H1 (cell line): ENCODE measurements at regions of chr11 and their contacts with region 1.

Region 1: GRCh38 chr11:65700391-65700790 is 11.7 kb upstream of the KAT5 start:
- DNase-seq: no peak
- H3K4me3 ChIP-seq: no peak overlapping the region
- H3K27ac ChIP-seq: no peak overlapping the region
- H3K4me1 ChIP-seq: no peaks in the 10 kb centered on the region
- H3K27me3 ChIP-seq: no peaks in the 10 kb centered on the region; a peak in 3 of 7 replicates
- CTCF ChIP-seq: no peak
- EP300 ChIP-seq: no peak
- POLR2A ChIP-seq: no peak
- RAD21 ChIP-seq: no peak

Region 2: GRCh38 chr11:65574109-65574810 is 126.1 kb before region 1 on chr11:
- CTCF ChIA-PET with region 1: no interaction called
- POLR2A ChIA-PET with region 1: no interaction called
- DNase-seq: peak; percentile 72 to 84
- H3K4me3 ChIP-seq: peak overlapping the region; percentile 20 to 63 (median 40); a peak in 7 of 8 replicates
- H3K27ac ChIP-seq: no peak overlapping the region
- H3K4me1 ChIP-seq: peaks cover 13 to 32% (median 20%) of the 10 kb centered on the region in 4 experiments
- H3K27me3 ChIP-seq: peaks cover 8 to 39% (median 28%) of the 10 kb centered on the region in 4 experiments
- CTCF ChIP-seq: peak in 2 of 3 experiments; percentile 70 to 80; a peak in 3 of 4 replicates
- EP300 ChIP-seq: no peak
- POLR2A ChIP-seq: no peak
- RAD21 ChIP-seq: peak; percentile 17 to 49; a peak in 3 of 4 replicates

Region 3: DNA sequence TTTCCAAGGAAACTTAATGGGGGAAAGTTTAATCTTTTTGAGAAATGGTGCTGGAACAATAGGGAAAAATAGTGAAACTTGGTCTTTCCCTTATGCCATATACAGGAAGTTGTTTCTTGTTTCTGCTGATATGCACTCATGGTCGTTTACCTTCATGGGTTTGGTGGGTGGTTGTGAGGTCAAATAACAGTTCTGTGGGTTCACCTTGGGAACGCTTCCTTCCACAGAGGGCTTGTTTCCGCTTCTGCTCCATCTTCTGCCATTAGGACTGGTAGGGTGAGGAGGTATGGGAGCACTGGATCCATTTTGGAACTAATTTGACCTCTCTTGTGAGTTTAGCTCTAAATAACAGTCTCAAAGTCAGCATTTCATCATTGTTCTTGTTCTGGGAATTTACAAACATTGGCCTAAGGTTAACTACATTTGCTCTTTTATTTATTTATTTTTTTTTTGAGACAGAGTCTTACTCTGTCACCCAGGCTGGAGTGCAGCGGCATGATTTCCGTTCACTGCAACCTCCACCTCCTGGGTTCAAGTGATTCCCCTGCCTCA is 20.1 kb before region 1 on chr11:
- CTCF ChIA-PET with region 1: interaction called, 12 read pairs
- POLR2A ChIA-PET with region 1: no interaction called
- DNase-seq: no peak
- H3K4me3 ChIP-seq: no peak overlapping the region
- H3K27ac ChIP-seq: no peak overlapping the region
- H3K4me1 ChIP-seq: no peaks in the 10 kb centered on the region
- H3K27me3 ChIP-seq: no peaks in the 10 kb centered on the region
- CTCF ChIP-seq: no peak
- EP300 ChIP-seq: no peak
- POLR2A ChIP-seq: no peak
- RAD21 ChIP-seq: no peak

Region 4: GRCh38 chr11:65720237-65720934 is 20.0 kb after region 1 on chr11 and contains the start of gene RNASEH2C:
- CTCF ChIA-PET with region 1: interaction called, 5 read pairs
- POLR2A ChIA-PET with region 1: interaction called, 12 read pairs
- DNase-seq: peak; percentile 44 to 90
- H3K4me3 ChIP-seq: peak within 1 kb of the TSS; percentile 83 to 91 (median 85)
- H3K27ac ChIP-seq: peak within 1 kb of the TSS; percentile 90
- H3K4me1 ChIP-seq: peaks cover 0 to 6% (median 3%) of the 10 kb centered on the region in 4 experiments; a peak in 2 of 7 replicates
- H3K27me3 ChIP-seq: no peaks in the 10 kb centered on the region
- CTCF ChIP-seq: no peak
- EP300 ChIP-seq: no peak
- POLR2A ChIP-seq: peak; percentile 80 to 81
- RAD21 ChIP-seq: no peak
- total RNA-seq, gene RNASEH2C: 37.9 and 40.2 TPM in 2 replicates

Region 5: DNA sequence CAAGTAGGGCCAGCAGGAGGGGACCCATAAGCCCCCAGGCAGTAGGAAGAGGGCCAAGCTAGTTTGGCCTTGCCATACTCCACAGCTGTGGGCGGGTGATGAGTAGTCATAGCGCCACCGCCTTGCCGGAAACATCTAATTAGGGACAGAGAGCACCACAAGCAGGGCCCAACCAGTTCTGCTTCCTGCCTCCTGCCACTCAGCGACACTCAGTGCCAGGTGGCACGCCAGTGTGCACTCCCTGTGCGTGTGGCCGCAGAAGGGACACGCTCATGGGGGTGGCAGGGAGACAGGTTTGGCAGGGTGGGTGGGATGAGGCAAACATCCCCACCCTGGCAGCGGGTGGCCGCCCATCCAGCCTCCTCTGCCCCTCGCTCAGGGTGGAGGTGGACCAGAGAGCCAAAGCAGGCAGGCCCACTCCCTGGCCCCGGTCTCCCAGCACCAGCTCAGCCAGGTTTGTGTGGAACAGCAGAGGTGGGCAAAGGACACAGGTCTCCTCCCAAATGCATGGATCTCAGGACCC is 91.4 kb after region 1 on chr11:
- CTCF ChIA-PET with region 1: no interaction called
- POLR2A ChIA-PET with region 1: no interaction called
- DNase-seq: no peak
- H3K4me3 ChIP-seq: no peak overlapping the region
- H3K27ac ChIP-seq: no peak overlapping the region
- H3K4me1 ChIP-seq: peaks cover 14 to 25% (median 22%) of the 10 kb centered on the region in 4 experiments
- H3K27me3 ChIP-seq: peaks cover 5 to 22% (median 18%) of the 10 kb centered on the region in 4 experiments
- CTCF ChIP-seq: no peak
- EP300 ChIP-seq: no peak
- POLR2A ChIP-seq: no peak
- RAD21 ChIP-seq: no peak

Region 6: GRCh38 chr11:65873318-65874156 is 173.1 kb after region 1 on chr11:
- CTCF ChIA-PET with region 1: no interaction called
- POLR2A ChIA-PET with region 1: no interaction called
- DNase-seq: peak; percentile 84 to 100
- H3K4me3 ChIP-seq: peak overlapping the region; percentile 49 to 77 (median 68)
- H3K27ac ChIP-seq: no peak overlapping the region
- H3K4me1 ChIP-seq: peaks cover 0 to 8% (median under 1%) of the 10 kb centered on the region in 4 experiments; a peak in 4 of 7 replicates
- H3K27me3 ChIP-seq: peaks cover 0 to 35% (median 14%) of the 10 kb centered on the region in 4 experiments; a peak in 4 of 7 replicates
- CTCF ChIP-seq: no peak
- EP300 ChIP-seq: no peak
- POLR2A ChIP-seq: peak in 1 of 2 experiments; percentile 30; a peak in 1 of 3 replicates
- RAD21 ChIP-seq: no peak